Lower leg skin (tissue), 4 donors: ENCODE measurements at regions of chr3 and their contacts with region 1.

Region 1: DNA sequence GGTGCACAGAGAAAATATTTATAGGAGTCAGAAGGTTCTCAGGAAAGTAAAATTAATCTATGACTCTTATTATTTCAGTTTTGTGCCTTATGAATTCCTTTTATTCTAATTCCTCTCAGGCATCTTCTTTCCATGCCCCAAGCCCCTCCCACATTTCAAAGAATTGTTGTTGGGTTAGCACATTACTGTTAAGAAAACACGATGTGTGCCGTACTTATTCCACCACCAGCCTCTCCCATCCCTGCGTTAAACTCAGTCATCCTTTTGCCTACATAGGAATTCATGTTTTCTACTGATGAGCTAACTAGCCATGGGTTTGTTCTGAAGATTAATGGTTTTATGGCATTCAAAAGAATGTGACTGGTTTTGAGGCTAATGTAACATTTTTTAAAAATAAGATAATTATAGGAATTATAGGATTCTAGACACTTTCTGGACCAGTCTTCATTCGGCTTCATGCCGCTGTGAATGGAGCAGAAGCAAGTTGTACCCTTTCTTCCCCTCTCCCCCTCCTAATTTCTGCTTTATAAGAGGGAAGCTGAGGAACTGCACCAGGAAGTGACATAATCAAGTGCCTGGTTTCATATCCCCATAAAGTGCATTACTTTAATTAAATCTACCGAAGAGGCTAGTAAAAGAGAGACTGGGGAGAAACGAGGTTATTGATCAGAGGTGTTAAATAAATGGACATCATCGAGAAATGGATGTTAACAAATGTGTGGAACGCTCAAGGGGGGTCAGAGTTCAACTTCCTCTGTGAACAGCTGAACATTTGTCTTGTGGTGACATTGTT is 12.3 kb upstream of the MB21D2 start:
- DNase-seq: no peak
- H3K4me3 ChIP-seq: no peak overlapping the region
- CTCF ChIP-seq: no peak
- POLR2A ChIP-seq: no peak

Region 2: DNA sequence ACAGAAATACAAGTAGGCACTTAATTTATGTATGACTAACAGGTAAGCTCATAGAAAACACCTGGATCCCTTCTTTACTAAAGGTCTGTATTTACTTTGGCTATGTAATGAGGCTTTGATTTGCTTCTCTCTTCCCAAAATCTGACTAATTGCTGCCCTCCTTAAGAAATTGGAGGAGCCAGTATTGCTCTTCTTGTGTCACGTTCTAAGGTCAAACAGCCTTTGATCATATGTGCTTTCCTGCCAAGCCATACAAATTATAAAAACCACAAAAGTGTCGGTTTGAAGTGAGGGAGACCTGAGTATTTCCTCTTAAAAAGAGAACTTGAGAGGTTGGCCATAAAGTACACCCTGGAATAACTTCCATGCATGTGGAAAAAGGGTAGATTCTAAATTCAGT is 99.8 kb after region 1 on chr3:
- intact Hi-C with region 1: loop called (anchors 10 kb)
- DNase-seq: no peak
- H3K4me3 ChIP-seq: no peak overlapping the region
- CTCF ChIP-seq: no peak
- POLR2A ChIP-seq: no peak

Region 3: DNA sequence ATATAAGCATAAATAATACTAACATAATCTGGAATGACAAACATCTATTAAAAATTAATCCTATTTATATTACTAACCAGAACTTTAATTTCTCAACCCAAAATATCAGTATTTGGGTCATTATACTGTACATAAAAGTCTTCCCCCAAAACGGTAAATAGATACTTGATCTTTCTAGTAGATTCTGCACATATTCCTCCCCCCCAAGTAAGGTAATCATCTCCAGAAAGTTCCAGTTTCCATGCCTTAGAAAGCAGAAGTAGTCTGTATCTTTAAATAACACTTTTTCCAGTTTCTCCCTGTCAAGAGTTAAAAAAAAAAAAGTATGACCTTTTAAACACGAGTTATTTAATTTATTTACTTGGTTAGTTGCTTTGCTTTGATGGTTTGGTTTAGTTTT is 138.4 kb after region 1 on chr3:
- intact Hi-C with region 1: no loop called
- DNase-seq: no peak
- H3K4me3 ChIP-seq: no peak overlapping the region
- CTCF ChIP-seq: no peak
- POLR2A ChIP-seq: no peak